ENCODE measurements at regions of chrX and their contacts with region 1.

Region 1: GRCh38 chrX:17923546-17923945 is 62.4 kb upstream of the RAI2 start:
- DNase-seq: no peak
- H3K4me3 ChIP-seq: no peak overlapping the region
- H3K27ac ChIP-seq: no peak overlapping the region
- H3K27me3 ChIP-seq: peaks cover 0 to 64% (median 11%) of the 10 kb centered on the region in 45 donors
- CTCF ChIP-seq: no peak

Region 2: GRCh38 chrX:18194688-18195087 is 271.1 kb after region 1 on chrX:
- intact Hi-C with region 1: loop called in 1 of 2 experiments (anchors 10 kb)
- DNase-seq: no peak
- H3K4me3 ChIP-seq: no peak overlapping the region
- H3K27ac ChIP-seq: no peak overlapping the region
- H3K27me3 ChIP-seq: peaks cover 0 to 36% (median 3%) of the 10 kb centered on the region in 45 donors
- CTCF ChIP-seq: no peak